Prostate gland (tissue), 2 donors: ENCODE measurements at regions of chr14 and their contacts with region 1.

Region 1: GRCh38 chr14:28751467-28752058 is 15.0 kb upstream of the FOXG1 start:
- DNase-seq: no peak
- H3K4me3 ChIP-seq: no peak overlapping the region
- H3K27ac ChIP-seq: no peak overlapping the region
- H3K4me1 ChIP-seq: no peaks in the 10 kb centered on the region
- H3K27me3 ChIP-seq: peaks cover 9% of the 10 kb centered on the region
- CTCF ChIP-seq: peak in 3 of 4 experiments; percentile 12 to 40 (median 27)
- POLR2A ChIP-seq: no peak

Region 2: DNA sequence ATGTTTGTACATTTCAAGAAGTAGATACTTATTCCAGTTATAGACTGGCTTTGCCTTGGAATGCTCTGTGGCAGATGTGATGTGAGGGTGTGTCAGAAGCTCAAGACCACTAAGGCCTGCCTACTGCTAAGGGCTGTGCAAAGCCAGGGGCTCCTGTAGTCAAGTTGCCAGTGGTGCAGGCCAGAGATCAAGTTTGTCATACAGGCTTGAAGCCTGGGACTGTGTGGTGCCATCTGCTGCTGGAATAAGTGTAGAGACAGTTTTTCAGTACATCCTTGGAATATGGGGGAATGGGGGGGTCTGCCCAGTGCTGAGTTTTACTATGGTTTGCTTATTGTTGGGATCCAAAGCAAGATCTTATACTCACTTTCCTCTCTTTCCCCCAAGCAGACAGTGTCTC is 634.8 kb before region 1 on chr14:
- intact Hi-C with region 1: no loop called
- DNase-seq: no peak
- H3K4me3 ChIP-seq: no peak overlapping the region
- H3K27ac ChIP-seq: no peak overlapping the region
- H3K4me1 ChIP-seq: no peaks in the 10 kb centered on the region
- H3K27me3 ChIP-seq: no peaks in the 10 kb centered on the region
- CTCF ChIP-seq: no peak
- POLR2A ChIP-seq: no peak

Region 3: GRCh38 chr14:28886940-28887339 is 135.4 kb after region 1 on chr14:
- intact Hi-C with region 1: no loop called
- DNase-seq: no peak
- H3K4me3 ChIP-seq: no peak overlapping the region
- H3K27ac ChIP-seq: no peak overlapping the region
- H3K4me1 ChIP-seq: no peaks in the 10 kb centered on the region
- H3K27me3 ChIP-seq: no peaks in the 10 kb centered on the region
- CTCF ChIP-seq: no peak
- POLR2A ChIP-seq: no peak

Region 4: GRCh38 chr14:29536886-29537511 is 785.4 kb after region 1 on chr14:
- intact Hi-C with region 1: loop called (anchors 2 kb)
- DNase-seq: no peak
- H3K4me3 ChIP-seq: no peak overlapping the region
- H3K27ac ChIP-seq: no peak overlapping the region
- H3K4me1 ChIP-seq: no peaks in the 10 kb centered on the region
- H3K27me3 ChIP-seq: no peaks in the 10 kb centered on the region
- CTCF ChIP-seq: peak in 2 of 4 experiments; percentile 13 to 33
- POLR2A ChIP-seq: no peak

Region 5: GRCh38 chr14:30214461-30215090 is 1463.0 kb after region 1 on chr14:
- intact Hi-C with region 1: loop called (anchors 10 kb)
- DNase-seq: peak; percentile 32
- H3K4me3 ChIP-seq: no peak overlapping the region
- H3K27ac ChIP-seq: no peak overlapping the region
- H3K4me1 ChIP-seq: no peaks in the 10 kb centered on the region
- H3K27me3 ChIP-seq: no peaks in the 10 kb centered on the region
- CTCF ChIP-seq: peak in 3 of 4 experiments; percentile 58 to 68 (median 63)
- POLR2A ChIP-seq: no peak